GM10248 (cell line): ENCODE measurements at regions of chr12 and their contacts with region 1.

Region 1: GRCh38 chr12:96250119-96250685 is 56.0 kb downstream of the ELK3 start:
- DNase-seq: no peak
- CTCF ChIP-seq: no peak

Region 2: DNA sequence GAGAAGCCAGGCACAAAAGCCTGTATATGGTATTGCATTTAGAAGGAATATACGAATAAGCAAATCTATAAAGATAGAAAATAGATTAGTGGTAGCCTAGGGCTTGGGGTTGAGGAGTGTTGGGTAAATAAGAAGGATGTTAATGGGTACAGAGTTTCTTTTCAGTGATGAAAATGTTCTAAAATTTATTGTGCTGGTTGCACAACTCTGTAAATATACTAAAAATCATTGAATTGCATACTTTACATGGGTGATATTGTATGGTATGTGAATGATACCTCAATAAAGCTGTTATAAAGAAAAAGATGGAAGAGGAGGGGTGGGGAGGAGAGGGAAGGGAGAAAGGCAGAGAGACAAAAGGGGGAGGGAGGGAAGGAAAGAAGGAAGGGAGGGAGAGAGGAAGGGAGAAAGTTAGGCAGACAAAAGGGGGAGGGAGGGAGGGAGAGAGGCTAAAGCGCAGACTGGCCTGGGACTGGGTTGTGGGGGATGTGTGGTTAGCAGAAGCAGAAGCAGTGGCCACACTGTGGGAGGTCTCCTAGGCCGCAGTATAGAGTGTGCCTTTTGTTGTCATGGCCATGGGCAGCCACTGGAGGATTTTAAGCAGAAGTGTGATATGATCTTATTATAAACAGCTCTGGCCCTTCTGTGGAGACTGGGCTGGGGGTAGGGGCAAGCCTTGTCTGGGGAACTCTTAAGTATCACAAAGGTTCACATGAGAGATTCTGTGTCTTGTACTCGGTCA is 129.7 kb before region 1 on chr12:
- CTCF ChIA-PET with region 1: no interaction called
- POLR2A ChIA-PET with region 1: no interaction called
- DNase-seq: peak; percentile 69
- CTCF ChIP-seq: no peak

Region 3: GRCh38 chr12:96237465-96238077 is 12.6 kb before region 1 on chr12:
- CTCF ChIA-PET with region 1: interaction called, 11 read pairs
- POLR2A ChIA-PET with region 1: no interaction called
- DNase-seq: no peak
- CTCF ChIP-seq: no peak

Region 4: DNA sequence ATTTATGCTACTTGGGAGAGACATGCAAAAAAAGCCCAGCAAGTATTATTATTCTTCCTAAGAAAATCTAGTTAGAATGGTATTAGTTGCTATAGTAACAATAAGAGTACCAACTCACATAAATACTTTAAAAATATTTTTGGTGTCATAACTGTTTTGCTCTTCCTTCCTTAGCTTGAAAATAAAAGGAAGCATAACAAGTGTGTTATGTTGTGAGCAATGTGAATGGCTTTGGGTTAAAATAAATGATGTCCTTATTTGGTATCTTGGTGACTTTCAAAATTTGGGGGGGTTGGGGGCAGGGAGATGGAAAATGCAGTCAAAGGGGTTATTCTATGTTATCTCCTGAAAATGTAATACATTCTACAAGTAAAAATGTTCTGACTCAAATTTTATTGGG is 35.0 kb after region 1 on chr12:
- CTCF ChIA-PET with region 1: no interaction called
- POLR2A ChIA-PET with region 1: no interaction called
- DNase-seq: no peak
- CTCF ChIP-seq: no peak